PC-3 (cell line): ENCODE measurements at regions of chr3 and their contacts with region 1.

Region 1: DNA sequence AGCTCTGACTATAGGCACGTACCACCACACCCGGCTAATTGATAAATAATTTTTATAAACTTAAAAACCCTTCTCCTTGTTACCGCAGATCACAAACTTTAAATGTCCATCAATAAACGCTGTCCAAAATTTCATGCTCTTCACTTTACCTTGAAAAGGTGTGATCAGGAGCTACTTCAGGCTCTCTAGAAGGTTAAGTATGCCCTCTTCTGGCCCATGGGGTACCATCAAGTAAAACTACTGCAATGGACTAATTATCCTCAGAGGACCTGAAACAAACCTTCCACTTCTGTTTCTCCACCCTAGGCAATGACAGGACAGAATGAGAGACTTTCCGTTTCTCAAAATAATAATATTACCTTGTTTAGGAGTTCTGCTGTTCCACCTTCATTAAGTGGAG is 9.2 kb downstream of the LZTFL1 start:
- DNase-seq: peak; percentile 63
- ATAC-seq: peak; percentile 83
- H3K4me3 ChIP-seq: no peak overlapping the region
- H3K27ac ChIP-seq: no peak overlapping the region
- H3K4me1 ChIP-seq: no peaks in the 10 kb centered on the region
- H3K27me3 ChIP-seq: no peaks in the 10 kb centered on the region
- CTCF ChIP-seq: peak; percentile 66

Region 2: DNA sequence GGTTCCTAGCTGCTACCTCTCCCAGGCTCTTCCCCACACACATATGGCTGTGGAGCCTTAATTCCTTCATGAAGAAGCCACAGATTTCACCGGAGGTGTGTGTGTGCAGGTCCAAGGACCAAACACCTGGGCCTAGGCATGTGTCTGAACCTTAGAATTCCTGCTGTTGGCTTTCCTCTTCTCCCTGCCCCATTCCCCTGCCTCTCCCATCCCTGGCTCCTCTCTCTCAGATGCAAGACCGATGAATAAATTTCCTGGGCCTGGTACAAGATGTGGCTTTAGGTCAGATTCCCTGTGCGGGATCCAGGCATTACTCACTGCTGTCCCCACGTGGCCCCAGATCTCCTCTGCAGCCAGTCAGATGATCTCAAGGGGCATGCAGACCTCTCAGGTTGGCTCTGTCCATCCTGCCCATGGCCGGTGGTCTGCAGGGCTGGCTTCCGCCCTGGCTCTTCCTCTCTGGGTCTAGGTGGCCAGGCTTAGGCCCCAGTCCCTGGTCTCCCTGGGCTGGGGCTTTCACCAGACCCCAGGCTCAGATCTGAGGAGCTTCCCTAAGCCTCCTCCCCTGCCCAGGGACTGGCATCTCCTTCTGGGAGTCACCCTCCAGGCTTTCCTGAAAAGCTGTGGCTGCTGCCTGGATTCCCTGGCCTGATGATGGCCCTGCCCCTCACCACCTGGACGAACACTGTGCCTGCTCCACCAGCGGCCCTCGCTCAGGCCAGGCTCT is 74.2 kb after region 1 on chr3:
- CTCF ChIA-PET with region 1: interaction called, 3 read pairs
- POLR2A ChIA-PET with region 1: no interaction called
- intact Hi-C with region 1: loop called (anchors 2 kb)
- DNase-seq: peak; percentile 63
- ATAC-seq: peak; percentile 95
- H3K4me3 ChIP-seq: no peak overlapping the region
- H3K27ac ChIP-seq: no peak overlapping the region
- H3K4me1 ChIP-seq: no peaks in the 10 kb centered on the region
- H3K27me3 ChIP-seq: no peaks in the 10 kb centered on the region
- CTCF ChIP-seq: peak; percentile 83